AG04449 (cell line): ENCODE measurements at regions of chr1 and their contacts with region 1.

Region 1: GRCh38 chr1:112390775-112391602 is 5.0 kb upstream of the CTTNBP2NL start:
- DNase-seq: peak; percentile 67
- H3K4me3 ChIP-seq: peak overlapping the region; percentile 50
- CTCF ChIP-seq: peak; percentile 79

Region 2: DNA sequence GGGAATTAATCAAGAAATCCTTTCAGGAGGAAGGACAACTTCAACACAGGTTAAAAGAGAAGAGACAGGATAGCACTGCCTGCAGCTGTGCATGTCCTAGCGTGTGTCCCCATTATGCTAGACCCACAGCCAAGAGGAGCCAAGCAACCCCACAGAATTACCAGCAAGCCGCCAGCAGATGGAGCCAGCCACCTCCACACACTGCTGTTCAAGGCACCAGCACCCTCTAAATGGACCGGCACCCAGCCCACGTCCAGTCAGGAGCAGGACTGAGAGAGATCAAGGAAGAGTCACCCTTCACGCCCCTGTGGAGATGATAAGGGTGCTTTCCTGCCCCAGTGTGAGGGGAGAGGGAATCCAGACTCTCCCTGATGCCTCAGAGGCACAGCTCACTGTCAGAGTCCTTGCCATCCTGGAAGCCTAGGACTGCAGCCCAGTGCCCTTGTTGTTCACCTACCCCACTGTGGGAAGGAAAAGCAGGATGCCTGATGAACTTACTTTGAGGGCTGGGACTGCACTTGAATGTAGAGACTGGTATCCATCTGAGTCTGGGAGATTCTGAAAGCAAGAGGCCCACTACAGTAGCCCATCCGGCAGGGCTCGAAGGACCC is 32.1 kb before region 1 on chr1:
- CTCF ChIA-PET with region 1: interaction called, 39 read pairs
- POLR2A ChIA-PET with region 1: interaction called, 4 read pairs
- DNase-seq: no peak
- H3K4me3 ChIP-seq: no peak overlapping the region
- CTCF ChIP-seq: peak; percentile 91

Region 3: DNA sequence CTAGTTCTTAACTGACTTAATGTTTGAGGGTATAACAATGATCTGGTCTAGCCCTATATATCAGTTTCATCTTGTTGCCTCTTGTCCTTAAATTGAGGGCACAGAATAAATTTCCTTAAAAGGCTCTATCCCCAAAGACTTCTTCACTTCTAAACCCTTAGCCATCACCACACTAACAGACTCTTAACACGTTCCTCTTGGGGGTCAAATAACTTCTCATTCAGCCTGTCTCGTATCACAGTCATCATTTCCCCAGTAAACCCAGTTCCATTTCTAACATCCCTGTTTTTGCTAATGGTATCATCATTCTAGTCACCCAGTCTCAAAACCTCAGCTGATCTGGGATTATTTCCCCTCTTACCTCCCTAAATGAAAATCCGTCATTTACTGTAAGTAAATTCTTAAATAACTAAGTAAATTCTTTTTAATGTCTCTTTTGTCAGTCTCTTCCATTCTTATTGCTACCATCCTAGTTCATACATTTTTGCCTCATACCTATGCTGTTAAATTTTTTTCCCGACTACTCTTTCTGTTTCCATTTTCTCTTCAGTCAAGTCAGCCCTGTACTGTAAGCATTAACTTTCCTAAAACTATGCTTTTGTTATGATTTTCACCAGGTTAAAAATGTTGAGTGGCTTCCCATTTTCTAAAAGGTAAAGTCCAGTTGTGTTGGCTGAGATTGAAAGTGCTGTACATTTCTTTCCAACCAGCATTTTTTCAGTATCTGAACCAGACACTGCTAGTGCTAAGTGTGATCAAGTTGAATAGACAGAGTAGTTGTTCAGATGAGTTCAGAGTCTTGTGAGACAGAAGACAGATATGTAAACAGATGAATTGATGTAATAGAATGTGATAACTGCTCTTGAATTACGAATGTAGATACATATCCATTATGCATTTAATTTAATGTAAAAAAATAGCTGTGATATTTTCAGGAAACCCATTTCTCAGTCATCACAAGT is 12.0 kb after region 1 on chr1:
- CTCF ChIA-PET with region 1: interaction called, 11 read pairs
- POLR2A ChIA-PET with region 1: interaction called, 5 read pairs
- DNase-seq: peak; percentile 26
- H3K4me3 ChIP-seq: no peak overlapping the region
- CTCF ChIP-seq: no peak

Region 4: GRCh38 chr1:112510340-112510739 is 119.4 kb after region 1 on chr1:
- CTCF ChIA-PET with region 1: interaction called, 10 read pairs
- POLR2A ChIA-PET with region 1: no interaction called
- DNase-seq: no peak
- H3K4me3 ChIP-seq: peak overlapping the region; percentile 67
- CTCF ChIP-seq: no peak

Region 5: DNA sequence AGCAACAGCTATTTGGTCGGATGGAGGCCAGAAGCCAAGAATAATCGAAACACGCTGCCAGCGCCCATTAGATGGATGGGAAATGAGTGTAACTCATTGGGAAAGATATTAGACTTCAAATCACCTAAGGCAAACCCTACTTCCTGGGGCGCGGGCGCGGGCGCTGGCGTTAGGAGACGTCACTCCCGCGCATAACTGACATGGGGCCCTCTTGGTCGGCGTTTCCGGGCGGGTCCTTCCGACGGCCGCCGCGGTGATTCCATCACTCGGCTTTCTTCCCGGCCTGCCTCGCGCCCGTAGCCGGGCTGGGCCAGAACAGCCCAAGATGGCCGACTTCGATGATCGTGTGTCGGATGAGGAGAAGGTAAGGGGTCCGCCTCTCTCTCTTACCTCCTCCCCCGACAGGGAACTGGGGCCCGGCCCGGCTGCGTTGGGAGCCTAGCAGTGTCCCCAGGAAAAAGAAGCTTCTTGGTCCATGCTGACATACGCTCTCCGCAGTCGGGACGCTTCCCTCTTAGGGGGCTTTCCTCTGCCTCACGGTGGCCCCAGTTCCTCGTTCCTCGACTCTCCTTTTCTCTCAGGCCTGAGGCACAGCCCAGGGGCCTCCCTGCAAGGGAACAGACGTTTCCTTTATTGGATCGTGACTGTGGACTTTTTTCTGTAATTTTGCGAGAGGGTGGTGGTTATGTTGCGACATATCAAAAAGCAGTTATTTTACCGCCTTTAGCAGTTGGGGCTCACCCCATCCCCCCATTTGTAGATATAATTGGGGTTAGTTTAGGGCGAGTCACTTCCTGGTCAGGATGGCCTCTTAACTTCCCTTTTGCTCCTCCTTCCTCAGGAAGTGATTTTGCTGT is 228.8 kb after region 1 on chr1 and contains the start of gene CAPZA1:
- CTCF ChIA-PET with region 1: interaction called, 205 read pairs
- POLR2A ChIA-PET with region 1: interaction called, 5 read pairs
- DNase-seq: peak; percentile 59
- H3K4me3 ChIP-seq: peak within 1 kb of the TSS; percentile 100
- CTCF ChIP-seq: no peak

Region 6: DNA sequence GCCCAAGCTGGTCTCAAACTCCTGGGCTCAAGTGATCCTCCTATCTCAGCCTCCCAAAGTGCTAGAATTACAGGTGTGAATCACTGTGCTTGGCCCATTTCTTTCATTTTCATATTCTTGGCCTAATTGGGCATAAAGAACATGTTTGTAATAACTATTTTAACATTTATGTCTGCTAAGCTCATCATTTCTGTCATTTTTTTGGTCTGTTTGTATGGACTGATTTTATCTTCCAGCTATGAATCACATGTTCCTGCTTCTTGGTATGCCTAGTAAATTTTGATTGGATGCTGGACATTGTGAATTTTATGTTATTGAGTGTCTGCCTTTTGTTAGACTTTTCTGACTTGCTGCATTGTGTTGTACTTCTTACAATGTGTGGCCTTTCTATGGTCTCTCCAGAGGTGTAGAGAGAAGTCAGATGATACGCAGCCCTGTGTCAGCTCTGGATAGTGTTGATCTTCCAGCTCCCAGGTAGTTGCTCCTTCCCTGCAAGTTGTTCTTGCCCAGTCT is 363.2 kb after region 1 on chr1:
- CTCF ChIA-PET with region 1: no interaction called
- POLR2A ChIA-PET with region 1: no interaction called
- DNase-seq: no peak
- H3K4me3 ChIP-seq: no peak overlapping the region
- CTCF ChIP-seq: no peak